Activated CD8-positive, alpha-beta memory T cell treated with anti-CD3 and anti-CD28 coated beads, Interleukin-2, amount 10 ng/mL, durations not matched to agents 7 days and 5 days (primary cell): ENCODE measurements at regions of chr1 and their contacts with region 1.

Region 1: GRCh38 chr1:235415008-235415904 is 48.0 kb downstream of the TBCE start:
- DNase-seq: peak; percentile 77
- ATAC-seq: peak; percentile 90
- H3K4me3 Mint-ChIP-seq: no peak overlapping the region
- H3K27ac Mint-ChIP-seq: peak overlapping the region; percentile 46
- H3K4me1 Mint-ChIP-seq: peaks cover 4% of the 10 kb centered on the region
- H3K27me3 Mint-ChIP-seq: no peaks in the 10 kb centered on the region

Region 2: DNA sequence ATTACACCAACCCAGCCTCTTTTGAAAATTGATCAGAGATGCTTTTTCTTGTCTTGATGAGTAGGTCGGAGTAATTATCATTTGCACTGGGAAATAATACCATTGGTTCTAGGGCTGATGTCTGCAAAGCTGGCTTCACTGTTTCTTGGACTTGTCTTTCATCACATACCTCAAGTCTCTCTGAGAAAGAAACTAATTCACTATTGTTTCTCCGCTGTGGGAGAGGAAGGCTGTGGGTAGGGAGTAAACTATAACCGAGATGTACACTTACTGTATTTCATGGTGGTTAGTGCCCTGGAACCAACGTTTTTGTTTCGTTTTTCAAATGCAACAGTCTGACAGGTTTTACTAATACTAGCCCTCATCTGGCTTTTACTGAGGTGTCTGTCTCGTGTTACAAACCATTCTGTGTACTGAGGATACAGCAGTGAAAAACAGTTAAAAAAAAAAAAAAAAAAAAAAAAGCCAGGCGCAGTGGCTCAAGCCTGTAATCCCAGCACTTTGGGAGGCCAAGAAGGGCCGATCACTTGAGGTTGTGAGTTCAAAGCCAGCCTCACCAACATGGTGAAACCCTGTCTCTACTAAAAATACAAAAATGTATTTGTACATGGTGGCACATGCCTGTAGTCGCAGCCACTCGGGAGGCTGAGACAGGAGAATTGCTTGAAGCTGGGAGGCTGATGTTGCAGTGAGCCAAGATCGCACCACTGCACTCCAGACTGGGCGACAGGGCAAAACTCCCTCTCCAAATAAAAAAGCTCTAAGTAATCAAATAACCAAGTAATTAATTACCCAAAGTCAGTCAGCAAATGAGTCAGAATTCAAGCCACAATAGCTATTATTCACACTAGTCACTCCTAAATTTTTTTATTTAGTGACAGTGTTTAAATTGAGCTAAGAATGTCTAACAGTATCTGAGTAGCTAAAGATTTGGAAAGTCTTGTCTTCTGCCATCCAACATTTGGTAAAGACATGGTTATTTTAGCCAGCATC is 309.9 kb before region 1 on chr1:
- CTCF ChIA-PET with region 1: interaction called, 73 read pairs
- DNase-seq: peak; percentile 74
- ATAC-seq: peak; percentile 79
- H3K4me3 Mint-ChIP-seq: peak overlapping the region; percentile 73
- H3K27ac Mint-ChIP-seq: peak overlapping the region; percentile 97
- H3K4me1 Mint-ChIP-seq: peaks cover 46% of the 10 kb centered on the region
- H3K27me3 Mint-ChIP-seq: peaks cover 4% of the 10 kb centered on the region

Region 3: DNA sequence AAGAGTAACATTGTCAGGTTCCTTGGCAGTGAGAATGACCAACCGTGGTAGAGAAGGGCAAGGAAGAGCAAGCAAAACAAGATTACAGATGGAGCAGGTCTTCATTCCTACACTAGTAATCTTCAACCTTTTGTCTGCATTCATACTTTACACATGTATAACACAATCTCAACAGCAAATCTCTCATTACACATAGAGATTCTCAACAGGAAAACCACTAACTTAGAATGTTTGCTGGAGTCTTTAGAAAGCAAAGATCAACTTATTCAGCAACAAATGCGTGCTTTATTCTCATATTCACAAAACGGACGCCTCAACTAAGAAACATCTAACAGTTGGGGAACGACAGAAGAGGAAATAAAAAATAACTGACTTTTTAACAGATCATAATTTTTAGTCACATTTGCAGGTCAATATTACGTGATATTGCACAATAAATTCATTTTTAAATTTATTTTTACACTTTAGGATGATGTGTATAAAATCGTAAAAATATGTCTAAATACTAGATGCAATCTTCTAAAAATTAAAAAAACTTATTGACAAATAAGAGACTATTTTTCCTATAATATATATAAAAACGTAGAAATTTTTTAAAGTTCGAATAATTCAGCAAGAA is 170.2 kb before region 1 on chr1:
- CTCF ChIA-PET with region 1: interaction called, 43 read pairs
- DNase-seq: no peak
- ATAC-seq: peak; percentile 41
- H3K4me3 Mint-ChIP-seq: no peak overlapping the region
- H3K27ac Mint-ChIP-seq: peak overlapping the region; percentile 10
- H3K4me1 Mint-ChIP-seq: peaks cover 39% of the 10 kb centered on the region
- H3K27me3 Mint-ChIP-seq: no peaks in the 10 kb centered on the region

Region 4: GRCh38 chr1:235259133-235259778 is 156.0 kb before region 1 on chr1:
- CTCF ChIA-PET with region 1: interaction called, 23 read pairs
- DNase-seq: no peak
- ATAC-seq: peak; percentile 53
- H3K4me3 Mint-ChIP-seq: no peak overlapping the region
- H3K27ac Mint-ChIP-seq: peak overlapping the region; percentile 45
- H3K4me1 Mint-ChIP-seq: peaks cover 36% of the 10 kb centered on the region
- H3K27me3 Mint-ChIP-seq: no peaks in the 10 kb centered on the region